ENCODE measurements at regions of chr19 and their contacts with region 1.

Region 1: GRCh38 chr19:6516659-6517291 is 14.1 kb upstream of the TNFSF9 start:
- DNase-seq: peak; percentile 92
- H3K4me3 Mint-ChIP-seq: peak overlapping the region; percentile 91
- H3K27ac Mint-ChIP-seq: peak overlapping the region; percentile 51
- H3K4me1 Mint-ChIP-seq: peaks cover 18% of the 10 kb centered on the region
- H3K27me3 Mint-ChIP-seq: no peaks in the 10 kb centered on the region
- CTCF ChIP-seq: peak; percentile 87

Region 2: GRCh38 chr19:6632002-6632621 is 115.3 kb after region 1 on chr19:
- CTCF ChIA-PET with region 1: interaction called, 10 read pairs
- intact Hi-C with region 1: loop called (anchors 2 kb)
- DNase-seq: peak; percentile 75
- H3K4me3 Mint-ChIP-seq: no peak overlapping the region
- H3K27ac Mint-ChIP-seq: no peak overlapping the region
- H3K4me1 Mint-ChIP-seq: peaks cover 10% of the 10 kb centered on the region
- H3K27me3 Mint-ChIP-seq: peaks cover 12% of the 10 kb centered on the region
- CTCF ChIP-seq: peak; percentile 17

Region 3: GRCh38 chr19:6737284-6738046 is 220.7 kb after region 1 on chr19 and contains the start of gene GPR108:
- CTCF ChIA-PET with region 1: interaction called, 6 read pairs
- intact Hi-C with region 1: loop called (anchors 10 kb)
- DNase-seq: peak; percentile 98
- H3K4me3 Mint-ChIP-seq: peak within 1 kb of the TSS; percentile 88
- H3K27ac Mint-ChIP-seq: peak within 1 kb of the TSS; percentile 97
- H3K4me1 Mint-ChIP-seq: peaks cover 21% of the 10 kb centered on the region
- H3K27me3 Mint-ChIP-seq: no peaks in the 10 kb centered on the region
- CTCF ChIP-seq: no peak
- total RNA-seq, gene GPR108: 67.7 and 69.0 TPM in 2 replicates

Measured in Calu3 (cell line).